Endothelial cell of umbilical vein (primary cell): ENCODE measurements at regions of chr11 and their contacts with region 1.

Region 1: DNA sequence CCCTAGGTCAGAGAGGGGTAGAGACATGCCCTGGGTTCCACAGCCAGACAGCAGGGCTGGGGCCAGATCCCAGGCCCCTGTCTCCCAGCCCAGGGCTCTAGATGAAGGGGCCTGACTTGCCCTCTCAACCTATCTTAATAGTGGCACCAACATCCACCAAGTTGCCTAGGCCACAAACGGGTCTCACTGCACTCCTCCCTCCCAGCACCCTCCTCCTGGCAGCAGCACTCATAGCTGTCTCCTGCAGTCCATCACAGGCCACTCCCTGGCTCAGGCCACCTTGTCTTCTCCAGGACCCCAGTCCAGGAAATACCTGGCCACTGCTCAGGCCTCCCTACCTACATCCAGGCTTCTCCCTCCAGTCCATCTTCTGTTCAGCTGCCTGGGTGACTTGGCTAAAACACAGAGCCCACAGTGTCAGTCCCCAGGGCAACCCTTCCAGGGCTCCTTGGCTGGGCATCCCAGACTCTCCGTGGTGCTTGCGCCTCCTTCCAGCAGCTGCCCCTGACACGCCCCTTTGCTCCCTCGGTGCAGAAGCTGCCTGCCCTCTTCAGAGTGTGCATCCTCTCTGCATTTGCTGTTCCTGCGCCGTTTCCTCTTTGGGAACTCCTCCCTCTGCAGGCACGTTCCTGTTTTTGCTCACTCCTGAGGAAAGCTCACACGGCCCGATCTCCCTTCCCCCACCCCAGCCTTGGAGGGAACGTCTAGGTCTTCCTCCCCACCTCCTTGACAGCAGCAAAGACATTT is 40.5 kb downstream of the LRRC32 start:
- DNase-seq: peak; percentile 96
- H3K4me3 ChIP-seq: no peak overlapping the region
- H3K27ac ChIP-seq: peak overlapping the region; percentile 93
- H3K4me1 ChIP-seq: peaks cover 36% of the 10 kb centered on the region
- H3K27me3 ChIP-seq: no peaks in the 10 kb centered on the region
- CTCF ChIP-seq: peak in 1 of 2 donors; percentile 27
- POLR2A ChIP-seq: peak; percentile 73

Region 2: GRCh38 chr11:76551400-76551799 is 78.6 kb before region 1 on chr11:
- CTCF ChIA-PET with region 1: no interaction called
- POLR2A ChIA-PET with region 1: no interaction called
- dilution Hi-C with region 1: no loop called
- intact Hi-C with region 1: loop called (anchors 1 kb)
- DNase-seq: peak; percentile 65
- H3K4me3 ChIP-seq: no peak overlapping the region
- H3K27ac ChIP-seq: peak overlapping the region; percentile 42
- H3K4me1 ChIP-seq: peaks cover 42% of the 10 kb centered on the region
- H3K27me3 ChIP-seq: no peaks in the 10 kb centered on the region
- CTCF ChIP-seq: peak in 1 of 2 donors; percentile 7
- POLR2A ChIP-seq: no peak

Region 3: DNA sequence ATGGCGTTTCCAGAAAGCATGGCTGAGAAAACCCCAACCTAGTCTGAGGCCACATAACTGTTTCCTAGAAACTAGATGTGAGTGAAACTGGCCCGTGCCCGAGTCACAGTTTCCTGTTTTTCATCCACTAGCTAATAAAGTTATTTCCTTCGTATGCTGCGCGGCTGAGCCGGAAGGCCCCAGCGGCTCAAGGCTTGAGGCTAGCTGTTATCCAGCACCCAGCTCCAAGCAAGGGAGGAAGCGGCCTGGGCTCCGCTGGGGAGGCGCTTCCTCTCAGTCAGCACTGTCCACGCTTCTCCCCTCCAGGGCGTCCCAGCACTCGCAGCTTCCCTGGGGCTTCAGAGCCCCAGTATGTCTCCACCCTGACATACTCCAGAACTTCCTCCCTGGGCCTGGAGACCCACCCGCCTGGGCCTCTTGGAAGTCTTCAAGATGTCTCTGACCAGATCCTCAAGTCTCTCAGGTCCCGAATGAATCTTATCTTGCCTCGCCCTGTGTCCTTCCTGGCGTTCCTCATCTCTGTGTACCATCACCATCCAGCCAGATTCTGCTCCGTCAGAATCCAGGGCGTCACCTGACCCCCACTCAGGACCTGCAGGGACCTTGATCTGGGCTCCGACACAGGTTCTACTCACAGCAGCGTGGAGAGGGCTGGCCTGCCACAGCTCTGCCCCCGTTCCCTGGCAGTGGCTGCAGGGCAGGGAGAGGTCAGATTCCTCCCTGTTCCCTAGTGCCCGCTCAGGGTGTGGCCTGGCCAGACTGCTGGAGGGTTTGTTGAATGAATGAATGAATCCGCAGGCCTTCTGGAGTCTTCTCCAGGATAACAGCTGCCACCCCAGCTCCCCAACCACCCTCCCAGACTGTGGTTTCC is 41.3 kb before region 1 on chr11:
- CTCF ChIA-PET with region 1: interaction called, 7 read pairs
- POLR2A ChIA-PET with region 1: interaction called, 4 read pairs
- dilution Hi-C with region 1: no loop called
- intact Hi-C with region 1: loop called (anchors 2 kb)
- DNase-seq: peak; percentile 99
- H3K4me3 ChIP-seq: no peak overlapping the region
- H3K27ac ChIP-seq: peak overlapping the region; percentile 94
- H3K4me1 ChIP-seq: peaks cover 23% of the 10 kb centered on the region
- H3K27me3 ChIP-seq: no peaks in the 10 kb centered on the region
- CTCF ChIP-seq: no peak
- POLR2A ChIP-seq: peak; percentile 88

Region 4: DNA sequence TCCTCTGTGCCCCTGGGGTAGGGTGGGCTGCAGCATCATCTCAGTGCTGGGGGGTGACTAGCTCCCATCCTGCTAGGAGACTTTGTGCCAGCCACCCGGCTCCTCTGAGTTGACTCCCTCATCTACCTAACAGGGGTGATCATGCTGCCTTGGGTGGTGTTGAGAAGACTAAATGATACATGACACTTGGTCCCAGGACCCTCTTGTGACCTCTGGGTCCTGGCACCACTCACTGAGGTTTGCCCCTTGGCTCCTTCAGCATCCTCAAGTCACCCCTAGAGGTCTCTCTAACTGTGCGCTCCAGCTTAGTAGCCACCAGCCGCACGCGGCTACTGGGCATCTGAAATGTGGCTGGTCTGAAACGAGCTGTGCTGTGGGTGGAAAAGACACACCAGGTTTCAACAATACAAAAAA is 31.6 kb before region 1 on chr11:
- CTCF ChIA-PET with region 1: interaction called, 13 read pairs
- POLR2A ChIA-PET with region 1: no interaction called
- dilution Hi-C with region 1: no loop called
- intact Hi-C with region 1: no loop called
- DNase-seq: peak; percentile 42
- H3K4me3 ChIP-seq: no peak overlapping the region
- H3K27ac ChIP-seq: no peak overlapping the region
- H3K4me1 ChIP-seq: peaks cover 9% of the 10 kb centered on the region
- H3K27me3 ChIP-seq: no peaks in the 10 kb centered on the region
- CTCF ChIP-seq: peak; percentile 22 to 49
- POLR2A ChIP-seq: no peak

Region 5: GRCh38 chr11:76615950-76616349 is 14.1 kb before region 1 on chr11:
- CTCF ChIA-PET with region 1: interaction called, 5 read pairs
- POLR2A ChIA-PET with region 1: no interaction called
- dilution Hi-C with region 1: no loop called
- intact Hi-C with region 1: loop called (anchors 2 kb)
- DNase-seq: peak; percentile 88
- H3K4me3 ChIP-seq: no peak overlapping the region
- H3K27ac ChIP-seq: peak overlapping the region; percentile 4
- H3K4me1 ChIP-seq: peaks cover 21% of the 10 kb centered on the region
- H3K27me3 ChIP-seq: no peaks in the 10 kb centered on the region
- CTCF ChIP-seq: no peak
- POLR2A ChIP-seq: no peak

Region 6: DNA sequence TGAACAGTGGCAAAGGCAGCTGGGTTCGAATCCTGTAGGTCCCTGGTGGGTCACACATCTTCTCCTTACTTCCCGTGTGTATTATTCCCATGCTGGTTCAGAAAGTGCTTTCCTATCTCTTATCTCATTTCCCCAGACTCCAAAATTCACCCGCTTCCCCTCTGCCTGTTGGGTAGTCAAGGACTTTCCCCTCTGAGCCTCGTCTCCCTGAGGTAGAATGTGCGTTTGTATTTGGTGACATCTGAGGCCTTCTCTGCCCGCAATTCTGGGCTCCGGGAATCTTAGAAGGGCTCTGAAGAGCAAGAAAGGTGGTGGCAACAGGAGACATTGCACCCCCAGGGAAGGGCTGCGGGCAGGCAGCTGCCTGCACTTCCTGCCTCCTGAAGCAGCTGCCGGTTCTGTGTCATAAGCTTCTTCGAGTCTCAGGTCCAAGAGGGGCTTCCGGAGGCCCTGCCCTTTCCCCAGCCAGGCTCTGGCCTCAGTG is 34.6 kb after region 1 on chr11:
- CTCF ChIA-PET with region 1: interaction called, 11 read pairs
- POLR2A ChIA-PET with region 1: interaction called, 3 read pairs
- dilution Hi-C with region 1: no loop called
- intact Hi-C with region 1: loop called (anchors 1 kb)
- DNase-seq: peak; percentile 69
- H3K4me3 ChIP-seq: no peak overlapping the region
- H3K27ac ChIP-seq: peak overlapping the region; percentile 87
- H3K4me1 ChIP-seq: peaks cover 58% of the 10 kb centered on the region
- H3K27me3 ChIP-seq: no peaks in the 10 kb centered on the region
- CTCF ChIP-seq: no peak
- POLR2A ChIP-seq: no peak

Region 7: DNA sequence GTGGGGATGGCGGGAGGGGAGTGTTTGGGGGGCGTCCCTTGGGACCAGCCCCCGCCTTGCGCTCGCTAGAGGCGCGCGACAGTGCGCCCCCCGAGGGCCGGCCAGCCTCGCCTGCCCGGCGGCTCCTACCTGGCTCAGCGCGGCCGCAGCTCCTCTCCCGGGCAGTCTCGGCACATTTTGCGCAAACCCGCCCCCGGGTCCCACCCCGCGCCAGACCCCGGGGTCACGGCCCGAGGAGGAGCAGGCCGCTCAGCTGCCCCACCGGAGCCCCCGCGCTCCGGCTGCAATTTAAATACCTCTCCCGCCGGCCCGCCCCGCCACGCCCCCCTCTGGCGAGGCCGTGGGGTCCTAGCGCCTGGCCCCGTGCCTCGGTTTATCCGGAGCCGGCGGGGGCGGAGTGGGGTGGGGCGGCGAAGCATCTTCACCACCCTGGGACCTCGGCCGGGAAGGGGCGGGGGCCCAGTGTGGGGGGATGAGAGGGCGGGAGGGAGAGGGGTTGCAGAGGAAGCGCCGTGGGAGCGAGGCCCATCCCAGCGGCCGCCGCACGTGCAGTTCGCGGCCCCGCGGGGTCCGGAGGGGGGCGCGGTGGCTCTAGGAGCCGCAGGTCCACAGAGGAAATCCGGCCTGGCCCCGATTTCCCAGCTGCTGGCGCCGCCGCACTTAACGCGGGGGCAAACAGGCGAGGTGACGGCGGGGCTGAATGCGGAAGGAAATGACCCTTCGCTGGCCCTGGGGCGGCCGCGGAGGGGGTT is 40.6 kb after region 1 on chr11 and contains the start of gene LRRC32:
- CTCF ChIA-PET with region 1: interaction called, 7 read pairs
- POLR2A ChIA-PET with region 1: no interaction called
- dilution Hi-C with region 1: no loop called
- intact Hi-C with region 1: loop called (anchors 1 kb)
- DNase-seq: peak; percentile 82
- H3K4me3 ChIP-seq: peak within 1 kb of the TSS; percentile 2 to 67 (median 59)
- H3K27ac ChIP-seq: peak within 1 kb of the TSS; percentile 79
- H3K4me1 ChIP-seq: peaks cover 53% of the 10 kb centered on the region
- H3K27me3 ChIP-seq: no peaks in the 10 kb centered on the region
- CTCF ChIP-seq: peak in 1 of 2 donors; percentile 33
- POLR2A ChIP-seq: peak; percentile 41
- total RNA-seq, gene LRRC32: 77.0 and 117 TPM in 2 replicates

Region 8: DNA sequence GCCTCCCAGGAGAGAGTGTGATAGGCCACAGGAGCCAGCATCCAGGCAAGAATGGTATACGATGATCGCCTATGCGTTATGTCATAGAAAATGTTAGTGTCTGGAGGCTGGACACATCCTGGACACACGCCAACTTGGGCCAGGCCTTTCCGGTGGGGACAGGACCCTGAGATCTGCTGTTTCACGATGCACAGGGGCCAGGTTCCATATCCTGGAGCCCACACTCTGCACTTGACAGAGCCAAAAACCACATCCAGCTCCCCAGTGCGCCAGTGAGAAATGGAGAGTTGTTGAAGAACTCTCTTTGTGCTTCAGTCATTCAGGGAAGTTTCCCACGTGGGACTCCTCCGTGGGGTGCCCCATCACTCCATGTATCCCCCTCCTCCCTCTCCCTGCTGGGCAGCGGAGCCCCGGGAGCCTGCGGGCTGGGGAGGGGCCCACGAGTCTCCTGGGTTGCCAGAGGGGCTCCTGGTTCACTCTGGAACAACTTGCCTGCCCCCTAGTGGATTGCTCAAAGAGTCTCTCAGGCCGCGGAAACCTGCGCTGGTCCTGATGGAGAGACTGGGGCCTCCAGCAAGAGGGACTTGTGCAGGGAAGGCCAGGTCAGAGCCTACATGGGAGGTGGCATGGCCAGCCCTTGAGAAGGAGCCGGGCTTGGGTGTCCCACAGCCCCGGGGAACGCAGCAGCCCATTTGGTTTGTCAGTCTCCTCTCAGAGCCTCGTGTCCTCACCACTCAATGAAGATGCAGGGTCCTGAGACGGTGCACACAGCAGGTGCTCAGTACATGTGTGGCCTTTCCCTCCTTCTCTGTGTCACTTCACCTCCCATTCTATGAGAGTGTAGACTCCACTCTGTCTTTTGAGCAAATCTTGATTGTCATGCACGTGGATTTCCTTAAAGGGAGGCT is 50.7 kb after region 1 on chr11:
- CTCF ChIA-PET with region 1: no interaction called
- POLR2A ChIA-PET with region 1: no interaction called
- dilution Hi-C with region 1: no loop called
- intact Hi-C with region 1: no loop called
- DNase-seq: peak; percentile 74
- H3K4me3 ChIP-seq: no peak overlapping the region
- H3K27ac ChIP-seq: no peak overlapping the region
- H3K4me1 ChIP-seq: no peaks in the 10 kb centered on the region
- H3K27me3 ChIP-seq: no peaks in the 10 kb centered on the region
- CTCF ChIP-seq: peak; percentile 78 to 89
- POLR2A ChIP-seq: no peak

Region 9: GRCh38 chr11:78268591-78269410 is 1638.8 kb after region 1 on chr11:
- CTCF ChIA-PET with region 1: no interaction called
- POLR2A ChIA-PET with region 1: no interaction called
- dilution Hi-C with region 1: no loop called
- intact Hi-C with region 1: no loop called
- DNase-seq: peak; percentile 30
- H3K4me3 ChIP-seq: no peak overlapping the region
- H3K27ac ChIP-seq: no peak overlapping the region
- H3K4me1 ChIP-seq: no peaks in the 10 kb centered on the region
- H3K27me3 ChIP-seq: no peaks in the 10 kb centered on the region
- CTCF ChIP-seq: no peak
- POLR2A ChIP-seq: no peak